K562 (cell line): ENCODE measurements at regions of chr2 and their contacts with region 1.

Region 1: GRCh38 chr2:207777124-207777523 is 7.4 kb upstream of the FZD5 start:
- DNase-seq: no peak
- ATAC-seq: no peak
- H3K4me3 ChIP-seq: no peak overlapping the region
- H3K27ac ChIP-seq: no peak overlapping the region
- H3K4me1 ChIP-seq: peaks cover 4% of the 10 kb centered on the region in 2 experiments; a peak in 3 of 5 replicates
- H3K27me3 ChIP-seq: no peaks in the 10 kb centered on the region
- CTCF ChIP-seq: no peak
- EP300 ChIP-seq: no peak
- POLR2A ChIP-seq: no peak
- RAD21 ChIP-seq: no peak

Region 2: DNA sequence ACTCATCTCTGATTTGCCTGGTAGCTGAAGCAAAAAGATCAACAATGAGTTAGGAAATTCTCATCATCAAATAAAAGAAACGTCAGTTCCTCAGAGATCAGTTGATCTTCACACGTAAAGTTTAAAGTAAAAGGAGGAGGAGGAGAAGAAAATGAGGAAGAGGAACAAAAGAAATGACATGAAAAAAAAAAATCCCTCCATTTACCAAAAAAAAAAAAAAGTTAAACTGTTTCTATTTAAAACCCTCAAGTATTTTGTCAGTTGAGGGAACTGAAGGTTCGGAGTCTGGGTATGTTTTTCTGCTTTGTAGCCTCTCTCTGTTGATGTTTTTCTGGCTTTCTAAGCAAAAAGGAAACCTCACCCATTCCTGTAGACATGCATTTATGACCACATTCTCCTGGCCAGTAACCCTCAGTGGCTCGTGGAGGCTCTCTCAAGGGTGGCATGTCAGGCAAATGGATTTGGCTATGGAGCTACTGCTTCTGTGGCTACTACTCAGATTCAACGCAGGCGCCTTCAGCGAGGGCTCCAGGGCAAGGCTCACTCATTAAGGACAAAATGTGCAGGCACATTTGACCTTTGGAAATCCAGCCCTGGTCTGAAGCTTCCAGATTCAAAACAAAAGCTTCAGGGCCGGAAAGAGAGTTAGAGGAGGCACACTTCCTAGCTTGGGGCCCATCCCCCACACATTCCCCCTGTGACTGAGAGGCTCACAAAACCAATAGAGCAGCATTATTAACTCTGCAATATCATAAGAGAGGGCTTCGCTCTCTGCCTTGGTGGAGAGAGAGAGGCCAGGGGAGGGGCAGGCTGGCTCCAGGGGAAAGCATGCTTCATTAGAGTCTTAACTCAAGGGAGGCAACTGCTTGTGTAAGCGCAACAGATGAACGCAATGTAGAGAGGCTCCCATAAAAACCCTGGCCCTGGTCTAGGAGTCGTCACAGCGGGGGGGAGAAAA is 633.6 kb before region 1 on chr2:
- CTCF ChIA-PET with region 1: no interaction called
- POLR2A ChIA-PET with region 1: no interaction called
- in situ Hi-C with region 1: no loop called
- intact Hi-C with region 1: no loop called
- DNase-seq: no peak
- ATAC-seq: no peak
- H3K4me3 ChIP-seq: no peak overlapping the region
- H3K27ac ChIP-seq: no peak overlapping the region
- H3K4me1 ChIP-seq: no peaks in the 10 kb centered on the region; a peak in 1 of 5 replicates
- H3K27me3 ChIP-seq: peaks cover 0 to 3% of the 10 kb centered on the region in 2 experiments; a peak in 2 of 5 replicates
- CTCF ChIP-seq: no peak
- EP300 ChIP-seq: no peak
- POLR2A ChIP-seq: no peak
- RAD21 ChIP-seq: no peak

Region 3: GRCh38 chr2:207792244-207792785 is 15.2 kb after region 1 on chr2:
- CTCF ChIA-PET with region 1: no interaction called
- POLR2A ChIA-PET with region 1: interaction called, 10 read pairs
- in situ Hi-C with region 1: no loop called
- intact Hi-C with region 1: loop called (anchors 2 kb)
- DNase-seq: peak; percentile 72 to 85 (median 74)
- ATAC-seq: peak; percentile 92
- H3K4me3 ChIP-seq: no peak overlapping the region
- H3K27ac ChIP-seq: peak overlapping the region; percentile 100
- H3K4me1 ChIP-seq: peaks cover 15 to 21% of the 10 kb centered on the region in 2 experiments; a peak in 4 of 5 replicates
- H3K27me3 ChIP-seq: no peaks in the 10 kb centered on the region
- CTCF ChIP-seq: no peak
- EP300 ChIP-seq: no peak
- POLR2A ChIP-seq: peak; percentile 67
- RAD21 ChIP-seq: no peak

Region 4: DNA sequence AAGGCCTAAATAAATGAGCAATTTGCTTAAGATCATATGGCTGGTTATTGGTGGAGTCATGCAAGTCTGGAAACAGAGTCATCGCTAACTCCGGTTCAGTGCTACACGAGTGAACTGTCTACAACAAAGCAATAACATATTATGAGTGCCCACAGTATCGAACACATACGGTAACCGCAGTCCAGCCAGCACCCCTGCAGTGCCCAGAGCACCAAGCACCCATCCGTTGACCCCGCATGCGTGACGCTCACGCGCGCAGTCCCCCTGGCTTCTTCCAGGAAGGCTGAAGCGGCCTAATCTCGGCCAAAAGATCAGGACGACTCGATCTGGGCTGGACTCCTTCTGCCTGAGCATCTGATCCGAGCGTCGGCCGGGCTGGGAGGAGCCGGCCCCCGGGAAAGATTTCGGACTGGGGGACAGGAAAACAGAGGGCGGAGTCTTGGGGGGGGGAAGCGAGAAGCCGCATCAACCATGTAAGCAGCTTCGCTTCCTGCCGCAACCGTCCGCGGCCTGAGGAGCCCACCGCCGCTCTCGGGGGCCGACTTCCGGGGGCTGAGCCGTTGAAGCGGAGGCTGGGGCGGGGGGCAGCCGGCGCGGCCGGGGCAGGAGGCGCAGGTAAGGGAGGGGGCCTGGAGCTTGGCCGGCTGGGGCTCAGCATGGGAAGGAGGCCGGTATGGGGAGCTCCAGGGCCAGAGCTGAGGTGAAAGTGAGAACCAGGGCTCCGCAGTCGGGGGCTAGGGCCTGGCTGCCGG is 488.9 kb after region 1 on chr2 and contains the start of gene PIKFYVE:
- CTCF ChIA-PET with region 1: no interaction called
- POLR2A ChIA-PET with region 1: no interaction called
- in situ Hi-C with region 1: no loop called
- intact Hi-C with region 1: no loop called
- DNase-seq: peak; percentile 81 to 96 (median 90)
- ATAC-seq: peak; percentile 89
- H3K4me3 ChIP-seq: peak within 1 kb of the TSS; percentile 96
- H3K27ac ChIP-seq: peak within 1 kb of the TSS; percentile 77
- H3K4me1 ChIP-seq: peaks cover 4 to 7% of the 10 kb centered on the region in 2 experiments; a peak in 4 of 5 replicates
- H3K27me3 ChIP-seq: no peaks in the 10 kb centered on the region
- CTCF ChIP-seq: no peak
- EP300 ChIP-seq: peak; percentile 27
- POLR2A ChIP-seq: peak; percentile 79
- RAD21 ChIP-seq: no peak
- polyA plus RNA-seq, gene PIKFYVE: 3.6 to 3.7 TPM